Colonic mucosa (tissue), 4 donors: ENCODE measurements at regions of chr5 and their contacts with region 1.

Region 1: DNA sequence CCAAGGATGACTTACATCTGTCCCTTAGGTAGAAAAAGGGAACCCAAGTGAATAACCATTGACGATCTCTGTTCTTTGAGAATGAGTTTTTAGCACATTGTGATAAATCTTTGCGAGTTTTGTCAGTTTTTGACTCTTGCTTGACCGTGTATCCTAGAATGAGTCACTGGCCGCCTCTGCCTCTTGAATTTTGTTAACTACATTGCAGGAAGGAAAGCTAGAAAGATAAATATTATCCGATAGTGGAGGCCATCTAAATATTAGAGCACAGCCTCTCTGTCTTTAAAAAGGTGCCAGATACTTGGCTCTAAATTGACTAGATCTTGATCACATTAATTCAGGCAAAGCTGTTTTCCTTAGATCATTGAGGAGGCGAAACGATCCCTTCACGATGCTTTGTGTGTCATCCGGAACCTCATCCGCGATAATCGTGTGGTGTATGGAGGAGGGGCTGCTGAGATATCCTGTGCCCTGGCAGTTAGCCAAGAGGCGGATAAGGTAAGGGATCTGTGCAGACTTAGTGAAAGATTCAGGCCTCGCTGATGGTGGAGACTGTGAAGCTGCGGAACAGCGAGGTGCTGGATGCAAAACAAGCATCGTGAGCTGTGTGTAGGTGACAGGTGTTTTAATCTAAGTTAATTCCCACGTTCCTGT is 12.2 kb downstream of the CCT5 start:
- DNase-seq: no peak
- H3K4me3 ChIP-seq: no peak overlapping the region
- H3K27ac ChIP-seq: no peak overlapping the region
- H3K4me1 ChIP-seq: no peaks in the 10 kb centered on the region
- H3K27me3 ChIP-seq: no peaks in the 10 kb centered on the region
- CTCF ChIP-seq: no peak

Region 2: DNA sequence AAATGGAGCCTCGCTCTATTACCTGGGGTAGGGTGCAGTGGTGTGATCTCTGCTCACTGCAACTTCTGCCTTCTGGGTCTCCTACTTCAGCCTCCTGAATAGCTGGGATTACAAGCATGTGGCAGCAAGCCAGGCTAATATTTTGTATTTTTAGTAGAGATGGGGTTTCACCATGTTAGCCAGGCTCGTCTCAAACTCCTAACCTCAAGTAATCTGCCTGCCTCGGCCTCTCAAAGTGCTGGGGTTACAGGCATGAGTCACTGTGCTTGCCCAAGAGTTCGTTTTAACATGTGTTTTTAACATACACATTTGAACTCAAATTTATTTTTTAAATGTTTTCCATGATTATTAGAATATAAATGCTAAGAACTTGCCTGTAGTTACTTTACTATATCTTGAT is 125.4 kb after region 1 on chr5:
- intact Hi-C with region 1: no loop called
- DNase-seq: no peak
- H3K4me3 ChIP-seq: no peak overlapping the region
- H3K27ac ChIP-seq: no peak overlapping the region
- H3K4me1 ChIP-seq: no peaks in the 10 kb centered on the region
- H3K27me3 ChIP-seq: no peaks in the 10 kb centered on the region
- CTCF ChIP-seq: no peak

Region 3: DNA sequence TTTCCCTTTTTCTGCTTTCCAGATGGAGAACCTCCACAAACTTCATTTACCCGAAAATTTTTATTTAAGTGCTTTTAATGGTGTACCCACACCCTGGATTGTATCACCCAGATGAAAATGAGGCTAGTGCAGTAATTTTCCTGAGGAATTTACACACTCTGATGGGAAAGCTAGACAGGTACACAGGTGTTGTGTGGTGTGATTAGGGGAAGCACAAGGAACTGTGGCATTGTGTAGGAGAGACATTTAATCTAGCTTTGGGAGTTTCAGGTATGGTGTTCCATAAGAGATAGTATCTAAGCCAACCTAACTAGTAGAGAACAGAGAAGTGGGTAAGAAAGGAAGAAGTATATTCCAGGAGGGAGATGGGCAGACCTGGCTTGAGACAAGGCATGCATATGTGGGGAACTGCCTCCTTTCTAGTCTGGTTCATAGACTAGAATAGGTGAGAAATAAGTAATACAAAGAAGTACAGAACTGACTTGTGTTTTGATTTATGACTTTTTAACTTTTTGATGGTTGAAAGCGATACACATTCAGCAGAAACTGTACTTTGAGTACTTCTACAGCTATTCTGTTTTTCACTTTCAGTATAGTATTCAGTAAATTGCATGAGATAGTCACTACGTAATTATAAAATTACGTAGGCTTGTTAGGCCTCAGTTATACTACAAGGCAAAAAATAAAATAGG is 156.6 kb after region 1 on chr5:
- intact Hi-C with region 1: loop called (anchors 10 kb)
- DNase-seq: no peak
- H3K4me3 ChIP-seq: no peak overlapping the region
- H3K27ac ChIP-seq: no peak overlapping the region
- H3K4me1 ChIP-seq: no peaks in the 10 kb centered on the region
- H3K27me3 ChIP-seq: no peaks in the 10 kb centered on the region
- CTCF ChIP-seq: no peak

Region 4: GRCh38 chr5:10627160-10627701 is 365.0 kb after region 1 on chr5:
- intact Hi-C with region 1: no loop called
- DNase-seq: no peak
- H3K4me3 ChIP-seq: peak overlapping the region; percentile 35
- H3K27ac ChIP-seq: no peak overlapping the region
- H3K4me1 ChIP-seq: peaks cover 4% of the 10 kb centered on the region
- H3K27me3 ChIP-seq: no peaks in the 10 kb centered on the region
- CTCF ChIP-seq: no peak